H1 (cell line): ENCODE measurements at regions of chr2 and their contacts with region 1.

Region 1: DNA sequence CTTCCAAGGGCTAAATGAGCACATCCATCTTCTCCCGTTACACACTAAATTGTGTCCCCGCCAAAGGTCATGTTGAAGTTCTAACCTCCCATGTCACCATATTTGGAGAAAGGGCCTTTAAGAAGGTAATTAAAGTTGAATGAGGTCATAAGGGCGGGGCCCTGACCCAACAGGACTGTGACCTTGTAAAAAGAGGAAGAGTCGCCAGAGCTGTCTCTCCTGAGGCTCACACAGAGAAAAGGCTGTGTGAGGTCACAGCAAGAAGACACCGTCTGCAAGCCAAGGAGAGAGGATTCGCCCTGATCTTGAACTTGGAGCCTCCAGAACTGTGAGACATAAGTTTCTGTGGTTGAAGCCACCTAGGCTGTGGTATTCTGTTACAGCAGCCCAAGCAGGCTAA is 24.1 kb downstream of the TRABD2A start:
- DNase-seq: no peak
- H3K4me3 ChIP-seq: no peak overlapping the region
- H3K27ac ChIP-seq: no peak overlapping the region
- H3K4me1 ChIP-seq: peaks cover 7 to 17% (median 14%) of the 10 kb centered on the region in 4 experiments
- H3K27me3 ChIP-seq: peaks cover 16 to 36% (median 30%) of the 10 kb centered on the region in 4 experiments
- CTCF ChIP-seq: no peak
- EP300 ChIP-seq: no peak
- POLR2A ChIP-seq: no peak
- RAD21 ChIP-seq: no peak

Region 2: GRCh38 chr2:84741296-84741765 is 115.5 kb before region 1 on chr2:
- CTCF ChIA-PET with region 1: interaction called, 18 read pairs
- POLR2A ChIA-PET with region 1: no interaction called
- DNase-seq: peak; percentile 46 to 66
- H3K4me3 ChIP-seq: no peak overlapping the region
- H3K27ac ChIP-seq: no peak overlapping the region
- H3K4me1 ChIP-seq: no peaks in the 10 kb centered on the region
- H3K27me3 ChIP-seq: no peaks in the 10 kb centered on the region
- CTCF ChIP-seq: peak; percentile 62 to 83 (median 78)
- EP300 ChIP-seq: no peak
- POLR2A ChIP-seq: no peak
- RAD21 ChIP-seq: peak; percentile 60 to 70

Region 3: GRCh38 chr2:84832772-84833461 is 23.9 kb before region 1 on chr2:
- CTCF ChIA-PET with region 1: interaction called, 21 read pairs
- POLR2A ChIA-PET with region 1: no interaction called
- DNase-seq: no peak
- H3K4me3 ChIP-seq: no peak overlapping the region
- H3K27ac ChIP-seq: no peak overlapping the region
- H3K4me1 ChIP-seq: peaks cover 0 to 7% (median 2%) of the 10 kb centered on the region in 4 experiments; a peak in 5 of 7 replicates
- H3K27me3 ChIP-seq: peaks cover 0 to 2% (median 0%) of the 10 kb centered on the region in 4 experiments; a peak in 1 of 7 replicates
- CTCF ChIP-seq: no peak
- EP300 ChIP-seq: no peak
- POLR2A ChIP-seq: no peak
- RAD21 ChIP-seq: no peak

Region 4: DNA sequence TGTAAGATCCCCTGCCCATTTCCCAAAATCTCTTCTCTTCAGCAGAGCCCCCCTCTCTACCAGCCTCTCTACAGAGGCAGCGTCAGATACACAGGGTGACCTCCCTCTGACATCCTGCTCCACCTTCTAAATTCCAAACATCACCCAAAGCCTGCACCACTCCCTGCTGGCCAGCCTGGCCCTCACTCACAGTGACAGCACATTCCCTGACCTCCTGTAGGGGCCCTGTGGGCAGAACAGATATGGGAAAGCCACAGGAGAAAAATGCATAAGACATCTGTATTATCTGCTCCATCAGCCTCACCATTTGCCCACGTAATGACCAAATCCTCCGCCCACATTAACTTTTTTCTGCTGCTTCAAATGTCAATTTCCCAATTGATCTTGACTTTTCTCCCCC is 16.5 kb before region 1 on chr2:
- CTCF ChIA-PET with region 1: interaction called, 23 read pairs
- POLR2A ChIA-PET with region 1: no interaction called
- DNase-seq: no peak
- H3K4me3 ChIP-seq: no peak overlapping the region
- H3K27ac ChIP-seq: no peak overlapping the region
- H3K4me1 ChIP-seq: peaks cover 0 to 7% (median 0%) of the 10 kb centered on the region in 4 experiments; a peak in 1 of 7 replicates
- H3K27me3 ChIP-seq: no peaks in the 10 kb centered on the region
- CTCF ChIP-seq: peak in 1 of 3 experiments; percentile 15; a peak in 1 of 4 replicates
- EP300 ChIP-seq: no peak
- POLR2A ChIP-seq: no peak
- RAD21 ChIP-seq: peak; percentile 31 to 38

Region 5: GRCh38 chr2:84846041-84846663 is 10.6 kb before region 1 on chr2:
- CTCF ChIA-PET with region 1: interaction called, 25 read pairs
- POLR2A ChIA-PET with region 1: no interaction called
- DNase-seq: no peak
- H3K4me3 ChIP-seq: no peak overlapping the region
- H3K27ac ChIP-seq: no peak overlapping the region
- H3K4me1 ChIP-seq: peaks cover 0 to 4% (median 0%) of the 10 kb centered on the region in 4 experiments; a peak in 1 of 7 replicates
- H3K27me3 ChIP-seq: no peaks in the 10 kb centered on the region
- CTCF ChIP-seq: no peak
- EP300 ChIP-seq: no peak
- POLR2A ChIP-seq: no peak
- RAD21 ChIP-seq: no peak

Region 6: DNA sequence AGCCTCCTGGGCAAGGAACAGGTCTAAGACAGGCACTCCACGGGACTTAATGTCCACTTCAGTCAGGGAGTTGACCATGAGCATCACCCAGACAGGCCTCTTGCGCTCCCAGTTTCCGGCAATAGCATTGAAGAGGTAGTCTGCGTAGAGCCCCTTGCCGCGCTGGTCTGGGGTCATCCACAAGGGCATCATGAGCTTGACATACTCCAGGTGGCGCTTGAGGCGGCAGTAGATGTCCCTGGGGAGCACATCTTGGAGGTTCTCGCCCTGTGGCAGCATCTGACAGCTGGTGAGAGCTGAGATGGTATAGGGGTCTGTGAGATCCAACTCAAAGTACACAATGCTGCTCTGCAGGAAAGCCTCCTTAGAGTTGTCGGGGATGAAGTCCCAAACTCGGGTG is 13.5 kb after region 1 on chr2:
- CTCF ChIA-PET with region 1: interaction called, 13 read pairs
- POLR2A ChIA-PET with region 1: interaction called, 3 read pairs
- DNase-seq: no peak
- H3K4me3 ChIP-seq: no peak overlapping the region
- H3K27ac ChIP-seq: no peak overlapping the region
- H3K4me1 ChIP-seq: no peaks in the 10 kb centered on the region
- H3K27me3 ChIP-seq: no peaks in the 10 kb centered on the region
- CTCF ChIP-seq: peak; percentile 12 to 17 (median 13); a peak in 3 of 4 replicates
- EP300 ChIP-seq: no peak
- POLR2A ChIP-seq: no peak
- RAD21 ChIP-seq: peak in 1 of 2 experiments; percentile 10; a peak in 1 of 4 replicates

Region 7: GRCh38 chr2:84881581-84882414 is 25.0 kb after region 1 on chr2:
- CTCF ChIA-PET with region 1: interaction called, 23 read pairs
- POLR2A ChIA-PET with region 1: interaction called, 4 read pairs
- DNase-seq: peak in 1 of 2 experiments; percentile 92
- H3K4me3 ChIP-seq: peak overlapping the region; percentile 48 to 75 (median 62)
- H3K27ac ChIP-seq: no peak overlapping the region
- H3K4me1 ChIP-seq: peaks cover 0 to 3% (median under 1%) of the 10 kb centered on the region in 4 experiments; a peak in 3 of 7 replicates
- H3K27me3 ChIP-seq: peaks cover 12 to 42% (median 39%) of the 10 kb centered on the region in 4 experiments
- CTCF ChIP-seq: peak; percentile 66 to 86 (median 72)
- EP300 ChIP-seq: no peak
- POLR2A ChIP-seq: peak in 1 of 2 experiments; percentile 12; a peak in 1 of 3 replicates
- RAD21 ChIP-seq: peak; percentile 80 to 82